Heart left ventricle (tissue), 16 donors: ENCODE measurements at regions of chr12 and their contacts with region 1.

Region 1: DNA sequence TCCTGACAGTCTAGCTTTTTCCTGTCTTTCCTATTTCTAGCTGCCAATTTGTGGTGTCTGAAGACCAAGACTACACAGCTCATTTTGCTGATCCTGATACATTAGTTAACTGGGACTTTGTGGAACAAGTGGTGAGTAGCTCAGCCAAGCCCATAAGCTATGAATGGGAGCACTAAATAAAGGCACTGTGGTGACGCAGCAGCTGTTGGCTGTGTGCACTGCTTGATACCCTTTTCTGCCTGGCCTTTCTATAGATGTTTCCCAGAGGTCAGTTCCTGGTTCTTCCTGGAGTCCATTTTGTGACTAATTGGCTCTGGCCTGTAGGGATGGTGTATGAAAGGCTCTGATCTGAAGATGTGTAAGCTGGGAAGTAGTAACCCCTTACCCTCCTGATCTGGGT is 20.5 kb downstream of the RNF10 start:
- DNase-seq: peak in 4 of 5 donors; percentile 34 to 69 (median 42)
- ATAC-seq: peak; percentile 82 to 93 (median 89)
- H3K4me3 ChIP-seq: no peak overlapping the region
- H3K27ac ChIP-seq: peak overlapping the region; percentile 2 to 80 (median 45)
- H3K4me1 ChIP-seq: peaks cover 9 to 54% (median 42%) of the 10 kb centered on the region in 12 donors
- H3K27me3 ChIP-seq: no peaks in the 10 kb centered on the region
- CTCF ChIP-seq: no peak
- POLR2A ChIP-seq: no peak

Region 2: DNA sequence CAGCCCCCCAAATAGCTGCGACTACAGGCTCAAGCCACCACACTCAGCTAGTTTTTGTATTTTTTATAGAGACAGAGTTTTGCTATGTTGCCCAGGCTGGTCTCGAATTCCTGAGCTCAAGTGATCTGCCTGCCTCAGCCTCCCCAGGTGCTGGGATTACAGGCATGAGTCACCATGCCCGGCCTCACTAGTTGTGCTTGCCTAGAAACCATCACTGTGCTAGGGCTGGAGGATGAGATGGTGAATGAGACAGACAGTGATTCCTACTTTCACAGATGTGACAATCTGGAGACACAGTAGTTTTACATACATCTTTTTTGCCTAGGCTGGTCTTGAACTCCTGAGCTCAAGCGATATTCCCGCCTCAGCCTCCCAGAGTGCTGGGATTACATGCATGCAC is 178.3 kb before region 1 on chr12:
- intact Hi-C with region 1: no loop called
- DNase-seq: no peak
- ATAC-seq: no peak
- H3K4me3 ChIP-seq: no peak overlapping the region
- H3K27ac ChIP-seq: no peak overlapping the region
- H3K4me1 ChIP-seq: peaks cover 0 to 7% (median under 1%) of the 10 kb centered on the region in 12 donors
- H3K27me3 ChIP-seq: peaks cover 0 to 44% (median 0%) of the 10 kb centered on the region in 9 donors
- CTCF ChIP-seq: no peak
- POLR2A ChIP-seq: no peak

Region 3: DNA sequence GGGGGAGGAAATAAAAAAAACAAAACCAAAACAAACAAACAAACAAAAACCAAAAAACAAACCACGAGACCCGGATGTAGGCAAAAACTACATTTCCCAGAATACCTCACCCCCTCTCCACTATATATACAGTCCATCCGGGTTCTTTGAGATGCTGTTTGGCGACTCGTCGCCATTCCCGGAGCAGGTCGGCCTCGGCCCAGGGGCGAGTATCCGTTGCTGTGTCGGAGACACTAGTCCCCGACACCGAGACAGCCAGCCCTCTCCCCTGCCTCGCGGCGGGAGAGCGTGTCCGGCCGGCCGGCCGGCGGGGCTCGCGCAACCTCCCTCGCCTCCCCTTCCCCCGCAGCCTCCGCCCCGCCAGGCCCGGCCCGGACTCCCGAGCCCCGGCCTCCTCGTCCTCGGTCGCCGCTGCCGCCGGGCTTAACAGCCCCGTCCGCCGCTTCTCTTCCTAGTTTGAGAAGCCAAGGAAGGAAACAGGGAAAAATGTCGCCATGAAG is 20.4 kb before region 1 on chr12 and contains the start of gene RNF10:
- intact Hi-C with region 1: loop called in 1 of 10 experiments (anchors 2 kb)
- DNase-seq: peak; percentile 76 to 88 (median 83)
- ATAC-seq: peak; percentile 59 to 83 (median 74)
- H3K4me3 ChIP-seq: peak within 1 kb of the TSS; percentile 68 to 99 (median 94)
- H3K27ac ChIP-seq: peak within 1 kb of the TSS; percentile 94 to 98 (median 96)
- H3K4me1 ChIP-seq: peaks cover 12 to 50% (median 38%) of the 10 kb centered on the region in 12 donors
- H3K27me3 ChIP-seq: no peaks in the 10 kb centered on the region
- CTCF ChIP-seq: no peak
- POLR2A ChIP-seq: peak; percentile 97 to 98
- total RNA-seq, gene RNF10: 165 to 363 (median 278) TPM